ENCODE measurements at regions of chr15 and their contacts with region 1.

Region 1: GRCh38 chr15:50735156-50735555 is 30.4 kb downstream of the SPPL2A start:
- DNase-seq: no peak
- ATAC-seq: no peak
- H3K4me3 Mint-ChIP-seq: no peak overlapping the region
- H3K27ac Mint-ChIP-seq: no peak overlapping the region
- H3K4me1 Mint-ChIP-seq: no peaks in the 10 kb centered on the region
- H3K27me3 Mint-ChIP-seq: no peaks in the 10 kb centered on the region

Region 2: GRCh38 chr15:50484781-50485180 is 250.4 kb before region 1 on chr15:
- CTCF ChIA-PET with region 1: no interaction called
- POLR2A ChIA-PET with region 1: no interaction called
- intact Hi-C with region 1: loop called in 1 of 2 experiments (anchors 10 kb)
- DNase-seq: no peak
- ATAC-seq: peak; percentile 52
- H3K4me3 Mint-ChIP-seq: no peak overlapping the region
- H3K27ac Mint-ChIP-seq: no peak overlapping the region
- H3K4me1 Mint-ChIP-seq: peaks cover 25% of the 10 kb centered on the region
- H3K27me3 Mint-ChIP-seq: no peaks in the 10 kb centered on the region

Region 3: GRCh38 chr15:50798684-50799083 is 63.5 kb after region 1 on chr15:
- CTCF ChIA-PET with region 1: no interaction called
- POLR2A ChIA-PET with region 1: no interaction called
- intact Hi-C with region 1: no loop called
- DNase-seq: peak; percentile 11
- ATAC-seq: no peak
- H3K4me3 Mint-ChIP-seq: no peak overlapping the region
- H3K27ac Mint-ChIP-seq: no peak overlapping the region
- H3K4me1 Mint-ChIP-seq: peaks cover 5% of the 10 kb centered on the region
- H3K27me3 Mint-ChIP-seq: no peaks in the 10 kb centered on the region